Stomach (tissue), 19 donors: ENCODE measurements at regions of chr17 and their contacts with region 1.

Region 1: DNA sequence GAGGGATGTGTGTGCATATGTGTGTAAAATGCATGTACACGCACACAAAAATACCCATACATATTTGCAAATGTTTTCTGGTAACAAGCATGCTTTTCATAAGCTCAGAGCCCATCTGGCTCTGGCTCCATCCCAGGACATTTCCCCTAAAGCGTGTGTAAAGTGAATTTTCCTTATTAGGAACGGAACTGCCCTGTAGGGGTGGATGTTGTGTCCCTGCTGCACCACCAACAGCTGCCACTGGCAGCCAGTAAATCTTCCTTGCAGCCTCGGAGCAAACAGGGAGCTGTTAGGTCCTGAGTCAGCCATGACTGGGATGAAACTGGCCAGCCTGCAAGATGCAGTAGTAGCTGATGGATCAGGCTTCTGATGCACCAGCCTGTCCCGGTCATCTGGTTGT is 393.5 kb downstream of the UTP18 start:
- DNase-seq: peak in 1 of 2 donors; percentile 42
- H3K4me3 ChIP-seq: no peak overlapping the region
- H3K27ac ChIP-seq: no peak overlapping the region
- H3K4me1 ChIP-seq: no peaks in the 10 kb centered on the region
- H3K27me3 ChIP-seq: no peaks in the 10 kb centered on the region
- CTCF ChIP-seq: no peak
- EP300 ChIP-seq: no peak
- POLR2A ChIP-seq: no peak

Region 2: DNA sequence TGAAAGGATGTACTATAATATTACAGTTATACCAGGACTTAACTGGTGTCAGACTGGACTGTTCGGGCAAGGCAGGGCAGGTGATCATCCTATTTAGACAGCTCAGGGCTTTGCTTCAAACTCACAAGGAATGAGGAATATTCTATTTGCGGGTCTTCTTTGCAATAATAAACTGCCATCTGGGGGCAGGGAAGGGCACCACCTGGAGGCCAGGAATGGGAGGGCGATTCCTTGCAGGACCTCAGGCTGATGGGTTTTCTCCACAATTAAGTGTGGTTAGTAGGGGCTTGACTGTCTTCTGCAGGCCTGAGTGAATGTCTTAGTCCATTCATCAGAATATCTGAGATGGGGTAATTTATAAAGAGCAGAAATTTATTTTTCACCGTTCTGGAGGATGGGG is 80.6 kb after region 1 on chr17:
- intact Hi-C with region 1: loop called (anchors 10 kb)
- DNase-seq: peak in 1 of 2 donors; percentile 22
- H3K4me3 ChIP-seq: no peak overlapping the region
- H3K27ac ChIP-seq: no peak overlapping the region
- H3K4me1 ChIP-seq: no peaks in the 10 kb centered on the region
- H3K27me3 ChIP-seq: peaks cover 0 to 6% (median 0%) of the 10 kb centered on the region in 3 donors
- CTCF ChIP-seq: peak in 1 of 7 experiments; percentile 16
- EP300 ChIP-seq: no peak
- POLR2A ChIP-seq: no peak